ENCODE measurements at regions of chr18 and their contacts with region 1.

Region 1: DNA sequence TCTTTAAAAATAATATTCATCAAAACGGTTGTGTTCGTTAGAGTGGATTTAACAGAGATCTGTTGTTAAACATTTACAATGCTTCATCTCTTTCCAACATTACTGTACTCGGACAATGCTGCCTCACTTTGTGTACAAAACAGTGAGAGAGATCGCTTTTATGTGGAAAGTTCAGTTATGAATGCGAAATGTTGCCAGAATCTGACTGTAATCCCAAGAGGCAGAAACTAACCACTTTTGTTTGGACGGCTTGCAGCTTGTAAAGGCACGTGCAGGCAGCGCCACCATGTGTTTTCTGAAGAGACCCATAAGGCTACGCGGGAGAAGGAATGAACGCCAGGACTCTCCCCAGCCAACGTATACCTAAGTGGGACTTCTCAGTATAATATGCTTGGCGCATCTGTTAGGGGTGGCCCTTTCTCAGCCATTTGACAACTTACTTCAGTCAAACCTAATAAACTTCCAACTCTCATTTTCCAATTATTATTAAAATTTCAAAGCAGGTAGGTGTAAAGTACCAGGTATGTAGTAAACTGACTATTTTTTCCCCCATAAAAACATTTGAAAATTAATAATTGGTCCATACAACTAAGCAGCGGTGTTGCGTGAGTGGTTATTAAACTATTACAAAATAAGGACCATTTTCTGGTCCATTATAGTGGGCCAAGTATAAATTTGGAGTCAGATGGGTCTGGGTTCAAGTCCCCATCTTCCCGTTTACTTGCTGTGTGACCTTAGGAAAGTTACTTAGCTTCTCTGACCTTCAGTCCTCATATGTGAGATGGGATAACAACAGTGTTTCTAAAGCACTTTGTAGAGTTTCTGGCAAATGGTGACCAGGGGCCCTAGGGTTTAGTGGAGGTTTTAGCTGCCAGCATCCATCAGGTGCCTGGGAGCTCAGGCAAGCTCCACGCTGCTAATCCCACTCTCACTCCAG is 5.6 kb upstream of the NAPG start:
- DNase-seq: peak; percentile 82

Region 2: DNA sequence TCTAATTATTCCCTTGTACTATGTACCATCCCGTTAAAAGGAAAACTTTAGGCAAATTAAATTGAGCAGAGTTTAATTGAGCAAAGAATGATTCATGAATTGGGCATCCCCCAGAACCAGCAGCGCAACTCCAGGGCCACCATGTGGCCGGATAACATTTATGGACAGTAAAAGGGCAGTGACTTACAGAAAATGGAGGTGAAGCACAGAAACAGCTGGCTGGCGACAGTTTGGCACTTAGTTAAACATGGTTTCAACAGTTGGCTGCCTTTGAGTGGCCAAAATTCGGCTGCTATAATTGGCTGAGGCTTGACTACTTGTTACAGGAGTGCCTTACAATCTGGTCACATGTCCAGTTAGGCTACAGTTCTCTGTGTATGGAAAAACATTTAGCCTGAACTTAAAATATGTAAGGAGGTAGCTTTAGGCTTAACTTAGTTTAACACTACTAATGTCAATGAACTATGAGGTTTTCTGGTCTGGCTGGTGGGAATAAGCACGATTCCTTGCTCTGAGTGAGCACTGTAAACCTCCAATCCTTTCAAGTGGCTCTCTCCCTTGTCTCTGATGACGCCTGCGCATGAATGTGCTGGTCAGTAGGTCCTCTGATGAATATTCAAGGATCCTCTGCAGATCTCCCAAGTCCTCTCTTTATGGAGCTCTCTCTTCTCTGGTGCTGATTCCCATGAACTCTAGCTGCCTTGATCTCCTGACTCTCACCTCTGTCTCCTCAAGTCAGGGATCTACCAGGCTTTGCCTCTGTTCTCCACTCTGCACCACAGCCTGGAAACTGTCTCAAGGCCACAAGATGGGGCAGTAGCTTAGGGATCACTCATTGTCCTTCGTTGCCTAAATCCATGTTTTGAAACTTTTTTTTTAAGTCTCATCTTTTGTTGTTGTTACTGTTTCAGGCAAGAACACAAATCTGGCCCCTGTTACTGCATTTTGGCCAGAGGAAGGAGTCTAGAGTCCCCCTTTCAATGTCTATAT is 836.6 kb before region 1 on chr18:
- intact Hi-C with region 1: loop called (anchors 10 kb)
- DNase-seq: no peak

Region 3: GRCh38 chr18:9971313-9971920 is 548.9 kb before region 1 on chr18:
- intact Hi-C with region 1: loop called (anchors 2 kb)
- DNase-seq: no peak

Region 4: GRCh38 chr18:10006311-10006893 is 513.9 kb before region 1 on chr18:
- intact Hi-C with region 1: loop called (anchors 1 kb)
- DNase-seq: no peak

Region 5: GRCh38 chr18:10100941-10101701 is 419.1 kb before region 1 on chr18:
- intact Hi-C with region 1: loop called (anchors 10 kb)
- DNase-seq: no peak

Region 6: GRCh38 chr18:10453806-10454673 is 66.2 kb before region 1 on chr18 and contains the start of gene APCDD1:
- intact Hi-C with region 1: loop called (anchors 2 kb)
- DNase-seq: no peak
- total RNA-seq, gene APCDD1: 9.9 TPM